H1 (cell line): ENCODE measurements at regions of chr1 and their contacts with region 1.

Region 1: DNA sequence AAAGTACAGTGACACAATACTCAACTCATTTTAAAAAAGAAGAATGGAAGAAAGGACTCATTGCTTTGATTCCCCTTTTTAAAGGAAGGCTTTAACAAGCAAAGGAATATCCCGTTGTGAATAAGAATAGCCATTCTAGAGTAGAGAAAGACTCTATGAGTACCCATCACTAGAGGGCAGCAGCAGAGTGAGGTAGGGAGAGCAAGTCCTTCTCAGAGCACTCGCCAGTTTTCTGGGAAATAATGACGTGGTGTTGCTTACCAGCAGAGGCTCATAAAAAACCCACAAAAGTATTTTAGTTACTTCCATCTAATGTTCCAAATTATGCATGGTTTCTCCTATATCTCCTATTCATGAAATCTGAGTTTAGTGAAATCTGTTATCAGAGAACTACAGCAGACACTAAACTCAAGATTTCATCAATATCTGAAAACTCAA is 74.6 kb downstream of the USP24 start:
- DNase-seq: peak in 1 of 2 experiments; percentile 52
- H3K4me3 ChIP-seq: no peak overlapping the region
- H3K27ac ChIP-seq: no peak overlapping the region
- H3K4me1 ChIP-seq: no peaks in the 10 kb centered on the region
- H3K27me3 ChIP-seq: no peaks in the 10 kb centered on the region
- CTCF ChIP-seq: peak; percentile 35 to 75 (median 74)
- EP300 ChIP-seq: no peak
- POLR2A ChIP-seq: no peak
- RAD21 ChIP-seq: peak; percentile 80 to 84

Region 2: GRCh38 chr1:55127827-55128343 is 12.7 kb before region 1 on chr1:
- CTCF ChIA-PET with region 1: interaction called, 13 read pairs
- POLR2A ChIA-PET with region 1: interaction called, 4 read pairs
- DNase-seq: no peak
- H3K4me3 ChIP-seq: no peak overlapping the region
- H3K27ac ChIP-seq: no peak overlapping the region
- H3K4me1 ChIP-seq: no peaks in the 10 kb centered on the region
- H3K27me3 ChIP-seq: peaks cover 0 to 1% (median 0%) of the 10 kb centered on the region in 4 experiments; a peak in 1 of 7 replicates
- CTCF ChIP-seq: no peak
- EP300 ChIP-seq: no peak
- POLR2A ChIP-seq: no peak
- RAD21 ChIP-seq: no peak

Region 3: GRCh38 chr1:55204997-55205396 is 64.4 kb after region 1 on chr1:
- CTCF ChIA-PET with region 1: no interaction called
- POLR2A ChIA-PET with region 1: no interaction called
- DNase-seq: no peak
- H3K4me3 ChIP-seq: no peak overlapping the region
- H3K27ac ChIP-seq: no peak overlapping the region
- H3K4me1 ChIP-seq: peaks cover 0 to 3% (median 1%) of the 10 kb centered on the region in 4 experiments; a peak in 2 of 7 replicates
- H3K27me3 ChIP-seq: no peaks in the 10 kb centered on the region
- CTCF ChIP-seq: no peak
- EP300 ChIP-seq: no peak
- POLR2A ChIP-seq: no peak
- RAD21 ChIP-seq: no peak

Region 4: GRCh38 chr1:55215256-55216021 is 74.9 kb after region 1 on chr1 and contains the start of gene USP24:
- CTCF ChIA-PET with region 1: interaction called, 13 read pairs
- POLR2A ChIA-PET with region 1: no interaction called
- DNase-seq: peak; percentile 50 to 78
- H3K4me3 ChIP-seq: peak within 1 kb of the TSS; percentile 60 to 92 (median 78)
- H3K27ac ChIP-seq: peak within 1 kb of the TSS; percentile 98
- H3K4me1 ChIP-seq: peaks cover 0 to 18% (median 10%) of the 10 kb centered on the region in 4 experiments; a peak in 6 of 7 replicates
- H3K27me3 ChIP-seq: peaks cover 0 to 3% (median 1%) of the 10 kb centered on the region in 4 experiments; a peak in 2 of 7 replicates
- CTCF ChIP-seq: no peak
- EP300 ChIP-seq: no peak
- POLR2A ChIP-seq: peak; percentile 86 to 90
- RAD21 ChIP-seq: no peak; a peak in 1 of 4 replicates
- total RNA-seq, gene USP24: 33.8 and 34.6 TPM in 2 replicates

Region 5: DNA sequence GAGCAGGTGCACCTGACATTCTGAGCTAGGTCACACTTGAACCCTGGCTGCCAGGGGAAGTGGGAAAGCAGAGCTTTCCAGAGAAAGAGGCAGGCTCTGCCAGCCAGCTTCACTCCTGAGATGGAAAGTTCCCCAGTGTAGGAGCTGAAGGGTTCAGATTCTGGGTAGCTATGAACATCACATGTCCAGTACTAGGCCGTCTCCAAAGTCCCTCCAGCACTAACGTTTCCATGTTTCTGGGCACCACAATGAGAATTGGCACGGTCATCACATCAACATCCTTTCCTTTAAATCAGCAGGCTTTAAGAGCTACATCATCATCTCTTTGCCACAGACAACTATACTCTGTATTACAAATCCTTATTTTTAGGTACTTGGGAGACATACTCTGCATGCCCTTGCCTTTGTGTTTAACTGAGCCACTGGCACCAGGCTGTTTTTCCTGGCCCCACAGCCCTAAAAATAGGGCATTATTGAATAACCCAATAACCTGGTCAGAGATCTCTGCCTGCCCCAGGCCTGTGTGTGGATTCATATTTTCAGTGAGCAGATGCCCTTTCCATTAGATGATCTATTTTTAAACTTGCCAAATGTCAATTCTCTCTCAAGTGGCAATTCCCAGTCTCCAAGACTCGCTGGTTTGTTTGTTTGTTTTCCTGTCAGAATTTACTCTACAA is 110.0 kb after region 1 on chr1:
- CTCF ChIA-PET with region 1: interaction called, 14 read pairs
- POLR2A ChIA-PET with region 1: no interaction called
- DNase-seq: no peak
- H3K4me3 ChIP-seq: no peak overlapping the region
- H3K27ac ChIP-seq: no peak overlapping the region
- H3K4me1 ChIP-seq: no peaks in the 10 kb centered on the region
- H3K27me3 ChIP-seq: no peaks in the 10 kb centered on the region
- CTCF ChIP-seq: no peak
- EP300 ChIP-seq: no peak
- POLR2A ChIP-seq: no peak
- RAD21 ChIP-seq: no peak

Region 6: DNA sequence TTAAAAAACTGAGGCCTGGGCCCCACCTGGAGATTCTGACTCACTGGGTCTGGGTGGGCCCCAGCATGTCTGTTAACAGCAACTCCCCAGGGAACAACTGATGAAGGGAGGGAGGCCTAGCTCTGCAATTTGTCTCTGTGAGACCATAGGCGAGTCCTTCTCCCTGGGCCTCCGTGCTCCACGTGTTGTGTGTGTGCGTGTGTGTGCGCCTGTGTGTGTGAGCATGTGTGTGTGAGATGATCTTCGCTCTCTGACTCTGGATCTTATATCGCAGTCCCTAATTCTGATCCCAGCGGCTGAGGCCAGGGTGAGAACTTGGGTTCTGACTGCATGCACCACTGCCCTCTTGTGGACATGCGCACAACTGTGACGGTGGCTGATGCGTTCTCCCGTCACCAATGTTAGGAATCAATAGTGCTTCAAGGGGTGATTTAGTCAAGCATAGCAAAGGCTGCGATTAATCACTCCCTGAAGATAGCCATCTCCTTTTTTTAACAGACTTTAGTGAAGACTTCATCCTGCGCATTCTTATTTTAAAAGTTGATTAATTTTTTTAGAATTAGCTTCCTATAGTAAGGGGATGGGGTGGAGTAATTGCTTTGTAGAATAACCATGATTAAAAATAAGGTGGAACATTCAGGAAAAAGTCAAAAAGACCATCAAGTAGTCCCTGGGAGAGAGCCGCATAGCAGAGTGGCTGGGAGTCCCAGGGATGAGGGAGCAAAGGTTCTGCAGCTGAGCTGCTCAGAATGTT is 137.0 kb after region 1 on chr1:
- CTCF ChIA-PET with region 1: interaction called, 148 read pairs
- POLR2A ChIA-PET with region 1: no interaction called
- DNase-seq: peak; percentile 58 to 89
- H3K4me3 ChIP-seq: no peak overlapping the region
- H3K27ac ChIP-seq: no peak overlapping the region
- H3K4me1 ChIP-seq: peaks cover 0 to 10% (median 4%) of the 10 kb centered on the region in 4 experiments; a peak in 5 of 7 replicates
- H3K27me3 ChIP-seq: no peaks in the 10 kb centered on the region
- CTCF ChIP-seq: peak; percentile 84 to 96 (median 87)
- EP300 ChIP-seq: no peak
- POLR2A ChIP-seq: no peak
- RAD21 ChIP-seq: peak; percentile 89 to 90